Caco-2 (cell line): ENCODE measurements at regions of chr16 and their contacts with region 1.

Region 1: GRCh38 chr16:52861614-52862022 is 191.1 kb downstream of the CHD9NB start:
- DNase-seq: peak in 1 of 2 experiments; percentile 40
- H3K4me3 ChIP-seq: no peak overlapping the region
- H3K4me3 Mint-ChIP-seq: no peak overlapping the region
- H3K27ac Mint-ChIP-seq: no peak overlapping the region
- H3K4me1 ChIP-seq: no peaks in the 10 kb centered on the region
- H3K4me1 Mint-ChIP-seq: no peaks in the 10 kb centered on the region
- H3K27me3 ChIP-seq: no peaks in the 10 kb centered on the region
- H3K27me3 Mint-ChIP-seq: peaks cover 13% of the 10 kb centered on the region
- CTCF ChIP-seq: peak; percentile 50 to 70

Region 2: DNA sequence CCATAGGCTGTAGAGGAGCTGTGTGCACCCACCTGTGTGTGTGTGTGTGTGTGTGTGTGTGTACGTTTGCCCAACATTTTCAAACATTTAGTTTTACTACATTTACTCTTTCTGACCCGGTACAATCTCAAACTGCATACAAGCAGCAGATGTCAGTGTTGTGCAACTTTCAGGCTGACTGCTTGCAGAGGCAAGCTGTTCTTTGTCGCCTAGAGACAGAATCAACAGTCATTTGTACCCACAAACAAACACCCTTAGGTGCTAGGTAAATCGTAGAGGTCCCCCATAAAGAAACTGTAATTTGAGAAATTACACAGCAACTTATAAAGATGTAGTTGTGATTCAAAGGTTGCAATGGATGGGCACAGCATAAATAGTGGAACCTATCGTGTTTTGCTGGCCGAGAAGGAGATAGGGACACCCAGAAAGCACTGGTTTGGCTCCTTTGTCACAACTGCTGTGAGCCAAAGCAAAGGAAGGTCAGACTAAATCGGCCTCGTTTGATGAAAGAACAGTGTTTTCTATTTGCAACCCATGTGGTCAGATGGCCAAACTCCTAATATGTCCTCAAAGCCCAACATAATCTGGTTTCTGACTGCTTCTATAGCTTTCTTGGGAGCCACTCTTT is 793.1 kb before region 1 on chr16:
- CTCF ChIA-PET with region 1: interaction called, 7 read pairs
- POLR2A ChIA-PET with region 1: no interaction called
- intact Hi-C with region 1: loop called (anchors 1 kb)
- DNase-seq: peak; percentile 44 to 46
- H3K4me3 ChIP-seq: no peak overlapping the region
- H3K4me3 Mint-ChIP-seq: no peak overlapping the region
- H3K27ac Mint-ChIP-seq: no peak overlapping the region
- H3K4me1 ChIP-seq: no peaks in the 10 kb centered on the region
- H3K4me1 Mint-ChIP-seq: no peaks in the 10 kb centered on the region
- H3K27me3 ChIP-seq: no peaks in the 10 kb centered on the region
- H3K27me3 Mint-ChIP-seq: peaks cover 5% of the 10 kb centered on the region
- CTCF ChIP-seq: peak in 1 of 2 experiments; percentile 49

Region 3: GRCh38 chr16:52191531-52192134 is 670.0 kb before region 1 on chr16:
- CTCF ChIA-PET with region 1: interaction called, 25 read pairs
- POLR2A ChIA-PET with region 1: no interaction called
- intact Hi-C with region 1: loop called (anchors 1 kb)
- DNase-seq: peak; percentile 68 to 77
- H3K4me3 ChIP-seq: no peak overlapping the region
- H3K4me3 Mint-ChIP-seq: no peak overlapping the region
- H3K27ac Mint-ChIP-seq: no peak overlapping the region
- H3K4me1 ChIP-seq: no peaks in the 10 kb centered on the region
- H3K4me1 Mint-ChIP-seq: no peaks in the 10 kb centered on the region
- H3K27me3 ChIP-seq: no peaks in the 10 kb centered on the region
- H3K27me3 Mint-ChIP-seq: peaks cover 4% of the 10 kb centered on the region
- CTCF ChIP-seq: peak; percentile 94 to 95

Region 4: GRCh38 chr16:52469775-52470174 is 391.8 kb before region 1 on chr16:
- CTCF ChIA-PET with region 1: no interaction called
- POLR2A ChIA-PET with region 1: no interaction called
- intact Hi-C with region 1: loop called (anchors 1 kb)
- DNase-seq: no peak
- H3K4me3 ChIP-seq: no peak overlapping the region
- H3K4me3 Mint-ChIP-seq: no peak overlapping the region
- H3K27ac Mint-ChIP-seq: no peak overlapping the region
- H3K4me1 ChIP-seq: no peaks in the 10 kb centered on the region
- H3K4me1 Mint-ChIP-seq: peaks cover 4% of the 10 kb centered on the region
- H3K27me3 ChIP-seq: no peaks in the 10 kb centered on the region
- H3K27me3 Mint-ChIP-seq: no peaks in the 10 kb centered on the region
- CTCF ChIP-seq: no peak

Region 5: GRCh38 chr16:52581530-52581929 is 280.1 kb before region 1 on chr16:
- CTCF ChIA-PET with region 1: no interaction called
- POLR2A ChIA-PET with region 1: no interaction called
- intact Hi-C with region 1: loop called (anchors 1 kb)
- DNase-seq: peak in 1 of 2 experiments; percentile 41
- H3K4me3 ChIP-seq: no peak overlapping the region
- H3K4me3 Mint-ChIP-seq: no peak overlapping the region
- H3K27ac Mint-ChIP-seq: no peak overlapping the region
- H3K4me1 ChIP-seq: peaks cover 10% of the 10 kb centered on the region
- H3K4me1 Mint-ChIP-seq: peaks cover 13% of the 10 kb centered on the region
- H3K27me3 ChIP-seq: no peaks in the 10 kb centered on the region
- H3K27me3 Mint-ChIP-seq: no peaks in the 10 kb centered on the region
- CTCF ChIP-seq: peak; percentile 57 to 80

Region 6: GRCh38 chr16:52812678-52813556 is 48.7 kb before region 1 on chr16:
- CTCF ChIA-PET with region 1: no interaction called
- POLR2A ChIA-PET with region 1: no interaction called
- intact Hi-C with region 1: no loop called
- DNase-seq: no peak
- H3K4me3 ChIP-seq: no peak overlapping the region
- H3K4me3 Mint-ChIP-seq: no peak overlapping the region
- H3K27ac Mint-ChIP-seq: no peak overlapping the region
- H3K4me1 ChIP-seq: no peaks in the 10 kb centered on the region
- H3K4me1 Mint-ChIP-seq: no peaks in the 10 kb centered on the region
- H3K27me3 ChIP-seq: no peaks in the 10 kb centered on the region
- H3K27me3 Mint-ChIP-seq: no peaks in the 10 kb centered on the region
- CTCF ChIP-seq: no peak